ENCODE measurements at regions of chr12 and their contacts with region 1.

Region 1: DNA sequence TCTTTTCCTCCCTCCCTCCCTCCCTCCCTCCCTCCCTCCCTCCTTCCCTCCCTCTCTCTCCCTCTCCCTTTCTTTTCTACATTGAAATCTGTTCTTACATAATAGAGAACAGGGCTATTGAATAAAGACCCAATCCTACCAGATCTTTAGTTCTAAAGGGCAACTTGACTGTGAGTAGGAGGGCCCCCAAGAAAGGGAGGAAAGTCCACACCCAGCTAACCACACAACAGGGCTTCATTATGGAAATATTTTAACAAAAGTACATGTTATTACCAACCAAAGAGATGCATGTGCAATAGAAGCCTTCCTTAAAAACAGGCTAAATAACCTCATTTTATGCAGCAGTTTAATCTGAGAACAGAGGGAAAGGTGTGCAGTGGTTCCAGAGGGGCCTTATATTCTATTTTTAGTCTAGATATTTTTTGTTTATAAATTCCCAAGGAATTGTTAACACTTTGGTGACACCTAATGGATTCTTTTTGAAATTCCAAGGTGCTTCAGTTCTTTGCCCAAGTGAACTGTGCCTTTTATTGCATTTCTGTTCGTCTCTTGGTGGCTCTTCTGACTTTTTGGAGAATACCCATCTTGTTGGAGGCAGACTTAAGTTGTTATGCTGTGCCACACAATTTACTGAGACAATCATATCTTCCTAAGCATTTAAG is 63.0 kb downstream of the GNS start:
- H3K4me3 ChIP-seq: no peak overlapping the region
- H3K27ac ChIP-seq: no peak overlapping the region
- H3K4me1 ChIP-seq: peaks cover 12% of the 10 kb centered on the region
- CTCF ChIP-seq: 0 out of 2 replicates have a peak, but pooled peaks have one; percentile 43

Region 2: GRCh38 chr12:64538121-64538520 is 158.1 kb before region 1 on chr12:
- CTCF ChIA-PET with region 1: interaction called, 18 read pairs
- POLR2A ChIA-PET with region 1: no interaction called
- H3K4me3 ChIP-seq: no peak overlapping the region
- H3K27ac ChIP-seq: no peak overlapping the region
- H3K4me1 ChIP-seq: no peaks in the 10 kb centered on the region
- CTCF ChIP-seq: no peak

Region 3: DNA sequence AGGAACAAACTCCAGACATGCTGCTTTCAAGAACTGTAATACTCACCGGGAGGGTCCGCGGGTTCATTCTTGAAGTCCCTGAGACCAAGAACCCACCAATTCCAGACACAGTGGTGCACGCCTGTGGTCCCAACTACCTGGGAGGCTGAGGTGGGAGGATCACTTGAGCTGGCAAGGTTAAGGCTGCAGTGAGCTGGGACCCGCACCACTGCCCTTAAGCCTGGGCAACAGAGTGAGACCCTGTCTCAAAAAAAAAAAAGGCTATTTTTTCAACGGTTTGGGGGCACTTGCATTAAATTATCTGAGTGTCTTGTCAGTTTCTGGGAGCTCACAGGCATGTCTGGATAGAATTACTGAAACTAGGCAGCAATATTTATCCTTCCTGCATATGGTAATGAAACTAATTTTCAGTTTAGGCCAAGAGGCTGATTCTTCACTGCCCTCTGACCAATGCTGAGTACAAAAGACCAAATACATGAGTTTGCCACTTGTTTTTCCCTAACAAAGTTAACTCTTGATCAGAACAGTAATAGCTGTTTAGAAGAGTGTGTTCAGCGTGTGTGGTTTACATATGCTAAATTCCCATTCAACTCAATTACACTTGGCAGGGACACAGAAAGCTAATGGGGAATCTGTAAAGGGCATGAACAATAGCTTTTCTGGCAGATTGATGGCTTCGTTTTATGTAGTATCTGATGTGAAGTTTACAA is 151.7 kb before region 1 on chr12:
- CTCF ChIA-PET with region 1: interaction called, 219 read pairs
- POLR2A ChIA-PET with region 1: interaction called, 3 read pairs
- H3K4me3 ChIP-seq: no peak overlapping the region
- H3K27ac ChIP-seq: no peak overlapping the region
- H3K4me1 ChIP-seq: no peaks in the 10 kb centered on the region
- CTCF ChIP-seq: no peak

Region 4: GRCh38 chr12:64560396-64561304 is 135.6 kb before region 1 on chr12:
- CTCF ChIA-PET with region 1: interaction called, 10 read pairs
- POLR2A ChIA-PET with region 1: no interaction called
- H3K4me3 ChIP-seq: no peak overlapping the region
- H3K27ac ChIP-seq: peak overlapping the region; percentile 42; the same call in 1 of the 2 replicates
- H3K4me1 ChIP-seq: peaks cover 10% of the 10 kb centered on the region
- CTCF ChIP-seq: no peak

Region 5: GRCh38 chr12:64610149-64610678 is 86.0 kb before region 1 on chr12 and contains the start of gene RASSF3:
- CTCF ChIA-PET with region 1: interaction called, 10 read pairs
- POLR2A ChIA-PET with region 1: interaction called, 3 read pairs
- H3K4me3 ChIP-seq: peak within 1 kb of the TSS; percentile 78
- H3K27ac ChIP-seq: peak within 1 kb of the TSS; percentile 93
- H3K4me1 ChIP-seq: no peaks in the 10 kb centered on the region
- CTCF ChIP-seq: no peak

Region 6: DNA sequence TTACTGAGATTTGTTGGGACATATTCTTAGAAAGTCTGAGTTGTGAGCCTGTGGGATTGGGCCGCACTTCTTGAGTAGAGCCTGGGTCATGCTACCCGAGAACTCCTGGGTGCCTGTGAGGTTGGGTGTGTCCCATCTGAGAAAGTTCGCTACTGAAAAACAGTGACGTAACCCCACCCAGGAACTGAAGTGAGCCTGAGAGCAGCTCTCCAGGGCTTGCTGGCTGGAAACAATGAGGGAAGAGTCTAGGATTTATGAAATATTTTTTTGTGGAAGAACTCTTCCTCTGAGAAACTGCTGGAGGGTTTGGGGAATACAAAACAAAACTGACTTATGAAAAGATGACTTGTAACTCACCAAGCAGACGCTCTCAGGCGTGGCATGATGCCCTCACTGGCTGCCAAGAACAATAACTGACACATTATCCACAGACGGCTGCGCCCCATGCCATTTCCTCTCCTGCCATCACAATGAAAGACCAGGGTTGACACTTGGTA is 16.7 kb before region 1 on chr12:
- CTCF ChIA-PET with region 1: interaction called, 15 read pairs
- POLR2A ChIA-PET with region 1: interaction called, 5 read pairs
- H3K4me3 ChIP-seq: no peak overlapping the region
- H3K27ac ChIP-seq: peak overlapping the region; percentile 49
- H3K4me1 ChIP-seq: peaks cover 38% of the 10 kb centered on the region
- CTCF ChIP-seq: no peak

Region 7: GRCh38 chr12:64706306-64706705 is 10.1 kb after region 1 on chr12:
- CTCF ChIA-PET with region 1: interaction called, 20 read pairs
- POLR2A ChIA-PET with region 1: interaction called, 5 read pairs
- H3K4me3 ChIP-seq: no peak overlapping the region
- H3K27ac ChIP-seq: no peak overlapping the region
- H3K4me1 ChIP-seq: no peaks in the 10 kb centered on the region
- CTCF ChIP-seq: no peak

Measured in HEK293 (cell line).